H1 (cell line): ENCODE measurements at regions of chr10 and their contacts with region 1.

Region 1: GRCh38 chr10:114470956-114471905 is 66.9 kb upstream of the AFAP1L2 start:
- DNase-seq: peak in 1 of 2 experiments; percentile 58
- H3K4me3 ChIP-seq: no peak overlapping the region
- H3K27ac ChIP-seq: no peak overlapping the region
- H3K4me1 ChIP-seq: peaks cover 4 to 9% (median 7%) of the 10 kb centered on the region in 4 experiments; a peak in 6 of 7 replicates
- H3K27me3 ChIP-seq: no peaks in the 10 kb centered on the region
- CTCF ChIP-seq: peak; percentile 74 to 83 (median 79)
- EP300 ChIP-seq: no peak
- POLR2A ChIP-seq: no peak
- RAD21 ChIP-seq: peak; percentile 89

Region 2: GRCh38 chr10:114328874-114329273 is 142.4 kb before region 1 on chr10:
- CTCF ChIA-PET with region 1: no interaction called
- POLR2A ChIA-PET with region 1: no interaction called
- DNase-seq: no peak
- H3K4me3 ChIP-seq: no peak overlapping the region
- H3K27ac ChIP-seq: no peak overlapping the region
- H3K4me1 ChIP-seq: no peaks in the 10 kb centered on the region; a peak in 1 of 7 replicates
- H3K27me3 ChIP-seq: no peaks in the 10 kb centered on the region
- CTCF ChIP-seq: no peak
- EP300 ChIP-seq: no peak
- POLR2A ChIP-seq: no peak
- RAD21 ChIP-seq: no peak

Region 3: GRCh38 chr10:114437456-114438292 is 33.6 kb before region 1 on chr10:
- CTCF ChIA-PET with region 1: interaction called, 14 read pairs
- POLR2A ChIA-PET with region 1: no interaction called
- DNase-seq: no peak
- H3K4me3 ChIP-seq: no peak overlapping the region
- H3K27ac ChIP-seq: no peak overlapping the region
- H3K4me1 ChIP-seq: no peaks in the 10 kb centered on the region
- H3K27me3 ChIP-seq: no peaks in the 10 kb centered on the region
- CTCF ChIP-seq: peak in 2 of 3 experiments; percentile 31 to 47; a peak in 2 of 4 replicates
- EP300 ChIP-seq: no peak
- POLR2A ChIP-seq: no peak
- RAD21 ChIP-seq: peak; percentile 49 to 57

Region 4: GRCh38 chr10:114486938-114487814 is 15.9 kb after region 1 on chr10:
- CTCF ChIA-PET with region 1: interaction called, 89 read pairs
- POLR2A ChIA-PET with region 1: no interaction called
- DNase-seq: no peak
- H3K4me3 ChIP-seq: no peak overlapping the region
- H3K27ac ChIP-seq: no peak overlapping the region
- H3K4me1 ChIP-seq: peaks cover 5 to 10% (median 7%) of the 10 kb centered on the region in 4 experiments; a peak in 5 of 7 replicates
- H3K27me3 ChIP-seq: no peaks in the 10 kb centered on the region
- CTCF ChIP-seq: peak in 1 of 3 experiments; percentile 22; a peak in 1 of 4 replicates
- EP300 ChIP-seq: no peak
- POLR2A ChIP-seq: no peak
- RAD21 ChIP-seq: 0 out of 4 replicates have a peak, but pooled peaks of 1 of the 2 experiments have one; percentile 10

Region 5: DNA sequence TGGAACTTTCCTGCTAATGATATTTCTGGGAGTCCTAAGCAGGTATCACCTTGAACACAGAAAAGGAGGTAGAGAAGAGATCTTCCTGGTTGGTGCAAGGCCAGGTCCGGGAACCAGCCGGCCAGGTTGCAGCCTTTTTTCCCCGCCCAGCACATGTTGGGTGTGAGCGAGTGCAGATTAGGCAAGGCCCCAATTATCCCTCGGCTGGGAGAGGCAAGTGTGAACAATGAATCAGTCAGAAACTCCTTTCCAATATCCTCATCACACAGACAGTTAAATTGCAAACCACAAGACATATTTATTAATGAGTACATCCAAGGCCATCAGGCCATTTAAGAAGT is 48.0 kb after region 1 on chr10:
- CTCF ChIA-PET with region 1: interaction called, 38 read pairs
- POLR2A ChIA-PET with region 1: no interaction called
- DNase-seq: no peak
- H3K4me3 ChIP-seq: no peak overlapping the region
- H3K27ac ChIP-seq: no peak overlapping the region
- H3K4me1 ChIP-seq: peaks cover 4 to 21% (median 9%) of the 10 kb centered on the region in 4 experiments
- H3K27me3 ChIP-seq: peaks cover 0 to 1% (median 0%) of the 10 kb centered on the region in 4 experiments; a peak in 1 of 7 replicates
- CTCF ChIP-seq: no peak
- EP300 ChIP-seq: no peak
- POLR2A ChIP-seq: no peak
- RAD21 ChIP-seq: no peak

Region 6: GRCh38 chr10:114532226-114532625 is 61.0 kb after region 1 on chr10:
- CTCF ChIA-PET with region 1: interaction called, 48 read pairs
- POLR2A ChIA-PET with region 1: interaction called, 8 read pairs
- DNase-seq: no peak
- H3K4me3 ChIP-seq: no peak overlapping the region
- H3K27ac ChIP-seq: no peak overlapping the region
- H3K4me1 ChIP-seq: no peaks in the 10 kb centered on the region; a peak in 1 of 7 replicates
- H3K27me3 ChIP-seq: peaks cover 0 to 3% (median 0%) of the 10 kb centered on the region in 4 experiments; a peak in 2 of 7 replicates
- CTCF ChIP-seq: no peak
- EP300 ChIP-seq: no peak
- POLR2A ChIP-seq: no peak
- RAD21 ChIP-seq: no peak

Region 7: DNA sequence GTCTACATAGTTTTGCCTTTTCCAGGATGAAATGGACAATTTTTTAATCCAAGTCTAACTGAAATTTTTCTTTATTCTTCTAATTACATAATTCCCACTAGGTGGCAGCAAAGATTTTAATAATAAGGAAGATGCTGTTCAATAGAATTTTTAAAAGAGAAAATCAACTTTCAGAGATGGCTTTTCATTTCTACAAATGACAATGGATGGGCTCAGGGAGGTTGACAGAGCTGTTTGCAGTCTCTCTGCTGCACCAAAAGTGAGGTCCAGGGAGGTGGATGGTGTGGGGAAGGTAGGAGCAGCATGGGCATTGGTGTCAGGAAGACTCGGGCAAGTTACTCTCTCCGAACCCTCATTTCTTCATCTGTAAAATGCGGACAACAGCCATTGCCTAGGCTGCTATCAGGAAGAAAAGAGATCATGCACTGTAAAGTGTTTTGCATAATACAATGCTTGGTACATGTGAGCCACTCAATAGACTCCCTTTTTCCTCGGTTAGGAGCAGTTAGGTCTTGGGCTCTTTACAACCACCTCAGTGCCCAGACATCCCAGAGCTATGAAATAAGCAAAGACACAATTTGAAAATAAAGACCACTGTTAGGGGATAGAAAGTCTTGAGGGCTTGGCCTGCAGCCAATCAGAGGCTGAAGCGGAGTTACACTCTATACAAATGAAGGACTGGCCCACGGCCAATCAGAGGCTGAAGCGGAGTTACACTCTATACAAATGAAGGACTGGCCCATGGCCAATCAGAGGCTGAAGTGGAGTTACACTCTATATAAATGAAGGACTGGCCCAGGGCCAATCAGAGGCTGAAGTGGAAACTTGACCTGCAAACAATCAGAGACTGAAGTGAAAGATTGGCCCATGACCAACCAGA is 79.8 kb after region 1 on chr10:
- CTCF ChIA-PET with region 1: interaction called, 186 read pairs
- POLR2A ChIA-PET with region 1: interaction called, 3 read pairs
- DNase-seq: no peak
- H3K4me3 ChIP-seq: no peak overlapping the region
- H3K27ac ChIP-seq: no peak overlapping the region
- H3K4me1 ChIP-seq: peaks cover 0 to 4% (median 0%) of the 10 kb centered on the region in 4 experiments; a peak in 1 of 7 replicates
- H3K27me3 ChIP-seq: no peaks in the 10 kb centered on the region
- CTCF ChIP-seq: peak in 1 of 3 experiments; percentile 8; a peak in 1 of 4 replicates
- EP300 ChIP-seq: no peak
- POLR2A ChIP-seq: no peak
- RAD21 ChIP-seq: peak in 1 of 2 experiments; percentile 39; a peak in 3 of 4 replicates

Region 8: GRCh38 chr10:114600057-114600456 is 128.8 kb after region 1 on chr10:
- CTCF ChIA-PET with region 1: no interaction called
- POLR2A ChIA-PET with region 1: no interaction called
- DNase-seq: no peak
- H3K4me3 ChIP-seq: no peak overlapping the region
- H3K27ac ChIP-seq: no peak overlapping the region
- H3K4me1 ChIP-seq: no peaks in the 10 kb centered on the region
- H3K27me3 ChIP-seq: no peaks in the 10 kb centered on the region
- CTCF ChIP-seq: no peak
- EP300 ChIP-seq: no peak
- POLR2A ChIP-seq: no peak
- RAD21 ChIP-seq: no peak

Region 9: DNA sequence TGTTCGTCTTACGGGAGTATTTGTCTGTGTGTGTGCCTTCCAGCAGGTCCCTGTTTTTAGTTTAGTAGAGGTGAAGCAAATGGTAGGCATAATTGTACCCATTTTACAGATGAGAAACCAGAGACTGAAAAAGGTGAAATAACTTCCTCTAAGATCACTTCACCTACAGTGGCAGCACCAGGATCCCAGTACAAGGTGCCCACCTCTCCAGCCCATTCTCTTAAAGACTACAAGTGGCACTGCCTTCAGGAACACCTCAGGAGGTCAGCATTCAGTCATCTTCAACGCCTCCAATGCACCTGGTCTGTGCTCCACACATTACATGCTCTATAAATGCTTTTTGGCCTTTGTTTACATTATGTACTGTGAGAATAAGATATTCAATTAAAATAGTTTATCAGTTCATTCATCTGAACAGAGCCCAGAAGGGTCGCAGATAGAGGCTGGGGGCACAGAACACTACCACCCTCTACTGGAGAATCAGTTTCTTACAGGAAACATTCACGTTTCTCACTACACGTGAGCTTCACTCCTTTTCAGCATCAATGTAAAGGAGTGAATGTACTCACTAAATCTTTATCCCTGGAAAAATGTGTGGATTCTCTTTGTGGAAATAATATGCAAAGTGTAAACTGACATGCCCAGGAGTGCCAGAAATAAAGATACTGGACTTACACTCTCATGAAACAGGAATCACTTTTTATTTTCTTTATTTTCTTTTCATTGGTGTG is 232.3 kb after region 1 on chr10:
- CTCF ChIA-PET with region 1: interaction called, 15 read pairs
- POLR2A ChIA-PET with region 1: no interaction called
- DNase-seq: peak in 1 of 2 experiments; percentile 48
- H3K4me3 ChIP-seq: no peak overlapping the region
- H3K27ac ChIP-seq: no peak overlapping the region
- H3K4me1 ChIP-seq: no peaks in the 10 kb centered on the region
- H3K27me3 ChIP-seq: no peaks in the 10 kb centered on the region
- CTCF ChIP-seq: peak in 2 of 3 experiments; percentile 68 to 74; a peak in 3 of 4 replicates
- EP300 ChIP-seq: no peak
- POLR2A ChIP-seq: no peak
- RAD21 ChIP-seq: peak; percentile 86 to 88